Heart right ventricle (tissue), 16 donors: ENCODE measurements at regions of chr4 and their contacts with region 1.

Region 1: GRCh38 chr4:39913471-39913870 is 64.2 kb downstream of the PDS5A start:
- DNase-seq: no peak
- ATAC-seq: no peak
- H3K4me3 ChIP-seq: no peak overlapping the region
- H3K27ac ChIP-seq: no peak overlapping the region
- H3K4me1 ChIP-seq: peaks cover 0 to 5% (median 0%) of the 10 kb centered on the region in 9 donors
- H3K27me3 ChIP-seq: no peaks in the 10 kb centered on the region
- CTCF ChIP-seq: no peak

Region 2: GRCh38 chr4:39961311-39961877 is 47.9 kb after region 1 on chr4:
- intact Hi-C with region 1: loop called in 1 of 10 experiments (anchors 10 kb)
- DNase-seq: no peak
- ATAC-seq: no peak
- H3K4me3 ChIP-seq: no peak overlapping the region
- H3K27ac ChIP-seq: no peak overlapping the region
- H3K4me1 ChIP-seq: peaks cover 0 to 25% (median 4%) of the 10 kb centered on the region in 9 donors
- H3K27me3 ChIP-seq: no peaks in the 10 kb centered on the region
- CTCF ChIP-seq: no peak